HCT116 (cell line): ENCODE measurements at regions of chr14 and their contacts with region 1.

Region 1: DNA sequence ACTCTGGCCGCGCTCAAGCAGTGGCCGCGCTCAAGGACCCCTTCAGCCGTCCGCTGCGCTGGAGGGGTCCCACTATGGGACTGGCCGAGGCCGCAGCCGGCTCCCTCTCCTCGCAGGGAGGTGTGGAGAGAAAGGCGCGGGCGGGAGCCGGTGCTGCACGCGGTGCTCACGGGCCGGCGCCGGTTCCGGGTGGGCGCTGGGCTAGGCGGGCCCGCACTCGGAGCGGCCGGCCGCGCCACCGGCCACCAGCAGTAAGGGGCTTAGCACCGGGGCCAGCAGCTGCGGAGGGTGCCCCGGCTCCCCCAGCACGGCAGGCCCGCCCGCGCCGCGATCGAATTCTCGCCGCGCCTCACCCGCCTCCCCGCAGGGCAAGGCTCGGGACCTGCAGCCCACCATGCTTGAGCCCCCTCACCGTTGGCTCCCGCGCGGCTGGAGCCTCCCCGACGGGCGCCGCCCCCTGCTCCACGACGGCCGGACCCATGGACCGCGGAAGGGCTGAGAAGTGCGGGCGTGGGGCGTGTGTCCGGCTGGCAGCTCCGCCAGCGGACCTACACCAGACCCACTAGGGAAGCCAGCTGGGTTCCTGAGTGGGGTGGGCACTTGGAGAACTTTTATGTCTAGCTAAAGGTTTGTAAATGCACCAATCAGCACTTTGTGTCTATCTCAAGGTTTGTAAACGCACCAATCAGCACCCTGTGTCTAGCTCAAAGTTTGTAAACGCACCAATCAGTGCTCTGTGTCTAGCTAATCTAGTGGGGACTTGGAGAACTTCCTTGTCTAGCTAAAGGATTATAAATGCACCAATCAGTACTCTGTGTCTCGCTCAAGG is 49.5 kb downstream of the KLHL28 start:
- DNase-seq: no peak
- ATAC-seq: no peak
- H3K4me3 ChIP-seq: no peak overlapping the region
- H3K27ac ChIP-seq: no peak overlapping the region
- H3K4me1 ChIP-seq: no peaks in the 10 kb centered on the region
- H3K27me3 ChIP-seq: no peaks in the 10 kb centered on the region
- CTCF ChIP-seq: no peak
- POLR2A ChIP-seq: no peak
- RAD21 ChIP-seq: no peak

Region 2: DNA sequence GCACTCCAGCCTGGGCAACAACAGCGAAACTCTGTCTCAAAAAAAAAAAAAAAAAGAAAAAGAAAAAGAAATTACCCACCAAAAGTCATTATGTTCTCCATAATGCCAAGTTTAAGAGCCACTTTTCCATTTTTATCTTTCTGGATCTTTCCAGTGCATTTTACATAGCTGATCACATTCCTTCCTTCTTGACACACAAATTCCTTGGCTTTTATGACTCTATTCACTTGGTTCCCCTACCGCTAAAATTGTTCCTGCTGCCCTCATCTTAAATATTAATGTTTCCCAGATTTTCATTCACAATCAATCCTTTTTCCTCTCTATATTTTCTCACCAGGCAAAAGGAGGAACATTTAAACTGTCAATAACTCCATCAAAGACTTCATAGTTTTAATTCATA is 29.3 kb after region 1 on chr14:
- CTCF ChIA-PET with region 1: no interaction called
- POLR2A ChIA-PET with region 1: no interaction called
- RAD21 ChIA-PET with region 1: no interaction called
- intact Hi-C with region 1: no loop called
- DNase-seq: no peak
- ATAC-seq: no peak
- H3K4me3 ChIP-seq: no peak overlapping the region
- H3K27ac ChIP-seq: no peak overlapping the region
- H3K4me1 ChIP-seq: no peaks in the 10 kb centered on the region
- H3K27me3 ChIP-seq: no peaks in the 10 kb centered on the region
- CTCF ChIP-seq: no peak
- POLR2A ChIP-seq: no peak
- RAD21 ChIP-seq: no peak

Region 3: GRCh38 chr14:45201905-45202304 is 289.6 kb after region 1 on chr14:
- CTCF ChIA-PET with region 1: interaction called, 11 read pairs
- POLR2A ChIA-PET with region 1: no interaction called
- RAD21 ChIA-PET with region 1: no interaction called
- intact Hi-C with region 1: no loop called
- DNase-seq: no peak
- ATAC-seq: peak; percentile 89
- H3K4me3 ChIP-seq: no peak overlapping the region
- H3K27ac ChIP-seq: no peak overlapping the region
- H3K4me1 ChIP-seq: no peaks in the 10 kb centered on the region
- H3K27me3 ChIP-seq: no peaks in the 10 kb centered on the region
- CTCF ChIP-seq: peak in 2 of 3 experiments; percentile 19 to 29; a peak in 2 of 6 replicates
- POLR2A ChIP-seq: no peak
- RAD21 ChIP-seq: 0 out of 2 replicates have a peak, but pooled peaks have one; percentile 3

Region 4: GRCh38 chr14:45267071-45267470 is 354.8 kb after region 1 on chr14:
- CTCF ChIA-PET with region 1: interaction called, 73 read pairs
- POLR2A ChIA-PET with region 1: no interaction called
- RAD21 ChIA-PET with region 1: interaction called, 3 to 12 read pairs
- intact Hi-C with region 1: loop called (anchors 1 kb)
- DNase-seq: no peak
- ATAC-seq: no peak
- H3K4me3 ChIP-seq: no peak overlapping the region
- H3K27ac ChIP-seq: no peak overlapping the region
- H3K4me1 ChIP-seq: no peaks in the 10 kb centered on the region
- H3K27me3 ChIP-seq: no peaks in the 10 kb centered on the region
- CTCF ChIP-seq: no peak
- POLR2A ChIP-seq: no peak
- RAD21 ChIP-seq: no peak

Region 5: GRCh38 chr14:45526715-45527549 is 614.7 kb after region 1 on chr14:
- CTCF ChIA-PET with region 1: no interaction called
- POLR2A ChIA-PET with region 1: no interaction called
- RAD21 ChIA-PET with region 1: no interaction called
- intact Hi-C with region 1: loop called (anchors 10 kb)
- DNase-seq: peak; percentile 51
- ATAC-seq: peak; percentile 95
- H3K4me3 ChIP-seq: no peak overlapping the region
- H3K27ac ChIP-seq: peak overlapping the region; percentile 1; the same call in 1 of the 2 replicates
- H3K4me1 ChIP-seq: peaks cover 4 to 11% of the 10 kb centered on the region in 2 experiments; a peak in 3 of 4 replicates
- H3K27me3 ChIP-seq: no peaks in the 10 kb centered on the region
- CTCF ChIP-seq: peak; percentile 36 to 68 (median 64); a peak in 5 of 6 replicates
- POLR2A ChIP-seq: no peak
- RAD21 ChIP-seq: peak; percentile 60